H1 (cell line): ENCODE measurements at regions of chr1 and their contacts with region 1.

Region 1: GRCh38 chr1:17776426-17776825 is 21.3 kb downstream of the ACTL8 start:
- DNase-seq: no peak
- H3K4me3 ChIP-seq: no peak overlapping the region
- H3K27ac ChIP-seq: no peak overlapping the region
- H3K4me1 ChIP-seq: no peaks in the 10 kb centered on the region; a peak in 2 of 7 replicates
- H3K27me3 ChIP-seq: no peaks in the 10 kb centered on the region
- CTCF ChIP-seq: no peak
- EP300 ChIP-seq: no peak
- POLR2A ChIP-seq: no peak
- RAD21 ChIP-seq: no peak

Region 2: GRCh38 chr1:17551755-17552234 is 224.6 kb before region 1 on chr1:
- CTCF ChIA-PET with region 1: no interaction called
- POLR2A ChIA-PET with region 1: no interaction called
- DNase-seq: no peak
- H3K4me3 ChIP-seq: peak overlapping the region in 2 of 4 experiments; percentile 7 to 44; a peak in 3 of 8 replicates
- H3K27ac ChIP-seq: no peak overlapping the region; the same call in 1 of the 2 replicates
- H3K4me1 ChIP-seq: peaks cover 18 to 50% (median 37%) of the 10 kb centered on the region in 4 experiments
- H3K27me3 ChIP-seq: no peaks in the 10 kb centered on the region
- CTCF ChIP-seq: no peak
- EP300 ChIP-seq: no peak
- POLR2A ChIP-seq: no peak; a peak in 1 of 3 replicates
- RAD21 ChIP-seq: no peak

Region 3: GRCh38 chr1:17742583-17742982 is 33.8 kb before region 1 on chr1:
- CTCF ChIA-PET with region 1: interaction called, 36 read pairs
- POLR2A ChIA-PET with region 1: no interaction called
- DNase-seq: no peak
- H3K4me3 ChIP-seq: no peak overlapping the region
- H3K27ac ChIP-seq: no peak overlapping the region
- H3K4me1 ChIP-seq: peaks cover 0 to 2% (median 0%) of the 10 kb centered on the region in 4 experiments; a peak in 2 of 7 replicates
- H3K27me3 ChIP-seq: no peaks in the 10 kb centered on the region
- CTCF ChIP-seq: no peak
- EP300 ChIP-seq: no peak
- POLR2A ChIP-seq: no peak
- RAD21 ChIP-seq: no peak

Region 4: GRCh38 chr1:17759114-17759513 is 17.3 kb before region 1 on chr1:
- CTCF ChIA-PET with region 1: interaction called, 27 read pairs
- POLR2A ChIA-PET with region 1: interaction called, 4 read pairs
- DNase-seq: peak in 1 of 2 experiments; percentile 71
- H3K4me3 ChIP-seq: no peak overlapping the region
- H3K27ac ChIP-seq: no peak overlapping the region
- H3K4me1 ChIP-seq: no peaks in the 10 kb centered on the region; a peak in 1 of 7 replicates
- H3K27me3 ChIP-seq: 0 out of 7 replicates have a peak, but pooled peaks cover 0 to 3% (median 0%) of the 10 kb centered on the region in 4 experiments
- CTCF ChIP-seq: peak; percentile 42 to 55 (median 49)
- EP300 ChIP-seq: no peak
- POLR2A ChIP-seq: no peak
- RAD21 ChIP-seq: peak; percentile 35 to 59

Region 5: GRCh38 chr1:17791055-17791390 is 14.6 kb after region 1 on chr1:
- CTCF ChIA-PET with region 1: interaction called, 20 read pairs
- POLR2A ChIA-PET with region 1: no interaction called
- DNase-seq: no peak
- H3K4me3 ChIP-seq: no peak overlapping the region
- H3K27ac ChIP-seq: no peak overlapping the region
- H3K4me1 ChIP-seq: peaks cover 0 to 5% (median 3%) of the 10 kb centered on the region in 4 experiments; a peak in 3 of 7 replicates
- H3K27me3 ChIP-seq: no peaks in the 10 kb centered on the region; a peak in 2 of 7 replicates
- CTCF ChIP-seq: no peak
- EP300 ChIP-seq: no peak
- POLR2A ChIP-seq: no peak
- RAD21 ChIP-seq: no peak

Region 6: DNA sequence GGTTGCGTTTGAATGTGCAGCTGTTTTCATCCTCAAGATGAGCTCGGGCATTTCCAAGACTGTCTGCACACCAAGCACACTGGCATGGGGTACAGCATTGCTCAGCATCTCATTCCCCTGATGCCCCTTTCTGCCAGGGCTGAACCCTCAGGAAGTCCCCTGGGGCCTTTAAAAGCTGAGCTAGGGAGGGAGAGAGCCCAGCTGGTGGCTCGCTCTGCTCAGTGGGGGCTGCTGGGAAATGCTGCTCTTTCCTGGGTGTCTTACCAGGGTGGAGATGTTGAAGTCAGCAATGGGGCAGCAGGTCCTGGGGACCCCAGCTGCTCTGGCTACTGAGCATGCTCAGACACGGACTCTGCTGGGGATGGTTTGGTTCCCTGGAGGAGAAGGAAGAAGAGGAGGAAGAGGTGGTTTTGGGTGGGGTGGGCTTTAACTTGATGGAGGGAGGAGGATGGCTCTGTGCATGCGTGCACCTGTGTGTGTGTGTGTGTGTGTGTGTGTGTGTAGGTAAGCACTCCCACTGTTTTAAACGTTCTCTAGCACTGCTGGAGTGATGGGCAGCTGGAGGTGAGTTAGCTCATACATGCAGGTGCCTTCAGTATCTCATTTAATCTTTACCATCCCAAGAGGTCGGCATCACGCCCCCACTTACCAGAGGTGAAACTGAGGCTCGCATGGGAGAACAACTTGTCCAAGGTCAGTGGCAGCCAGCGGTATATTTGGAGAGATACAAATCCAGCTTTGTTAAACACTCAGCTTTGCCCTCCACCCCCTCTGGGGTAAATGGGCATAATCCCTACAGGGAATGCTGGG is 19.6 kb after region 1 on chr1:
- CTCF ChIA-PET with region 1: interaction called, 20 read pairs
- POLR2A ChIA-PET with region 1: no interaction called
- DNase-seq: no peak
- H3K4me3 ChIP-seq: no peak overlapping the region
- H3K27ac ChIP-seq: no peak overlapping the region
- H3K4me1 ChIP-seq: no peaks in the 10 kb centered on the region
- H3K27me3 ChIP-seq: no peaks in the 10 kb centered on the region; a peak in 1 of 7 replicates
- CTCF ChIP-seq: no peak
- EP300 ChIP-seq: no peak
- POLR2A ChIP-seq: no peak
- RAD21 ChIP-seq: no peak

Region 7: GRCh38 chr1:17826165-17826488 is 49.7 kb after region 1 on chr1:
- CTCF ChIA-PET with region 1: interaction called, 17 read pairs
- POLR2A ChIA-PET with region 1: no interaction called
- DNase-seq: peak in 1 of 2 experiments; percentile 90
- H3K4me3 ChIP-seq: no peak overlapping the region
- H3K27ac ChIP-seq: no peak overlapping the region
- H3K4me1 ChIP-seq: no peaks in the 10 kb centered on the region
- H3K27me3 ChIP-seq: 0 out of 7 replicates have a peak, but pooled peaks cover 0 to 2% (median 0%) of the 10 kb centered on the region in 4 experiments
- CTCF ChIP-seq: peak; percentile 77 to 82 (median 78)
- EP300 ChIP-seq: no peak
- POLR2A ChIP-seq: no peak
- RAD21 ChIP-seq: peak; percentile 69 to 76